CD4-positive, alpha-beta memory T cell (primary cell): ENCODE measurements at regions of chr1 and their contacts with region 1.

Region 1: DNA sequence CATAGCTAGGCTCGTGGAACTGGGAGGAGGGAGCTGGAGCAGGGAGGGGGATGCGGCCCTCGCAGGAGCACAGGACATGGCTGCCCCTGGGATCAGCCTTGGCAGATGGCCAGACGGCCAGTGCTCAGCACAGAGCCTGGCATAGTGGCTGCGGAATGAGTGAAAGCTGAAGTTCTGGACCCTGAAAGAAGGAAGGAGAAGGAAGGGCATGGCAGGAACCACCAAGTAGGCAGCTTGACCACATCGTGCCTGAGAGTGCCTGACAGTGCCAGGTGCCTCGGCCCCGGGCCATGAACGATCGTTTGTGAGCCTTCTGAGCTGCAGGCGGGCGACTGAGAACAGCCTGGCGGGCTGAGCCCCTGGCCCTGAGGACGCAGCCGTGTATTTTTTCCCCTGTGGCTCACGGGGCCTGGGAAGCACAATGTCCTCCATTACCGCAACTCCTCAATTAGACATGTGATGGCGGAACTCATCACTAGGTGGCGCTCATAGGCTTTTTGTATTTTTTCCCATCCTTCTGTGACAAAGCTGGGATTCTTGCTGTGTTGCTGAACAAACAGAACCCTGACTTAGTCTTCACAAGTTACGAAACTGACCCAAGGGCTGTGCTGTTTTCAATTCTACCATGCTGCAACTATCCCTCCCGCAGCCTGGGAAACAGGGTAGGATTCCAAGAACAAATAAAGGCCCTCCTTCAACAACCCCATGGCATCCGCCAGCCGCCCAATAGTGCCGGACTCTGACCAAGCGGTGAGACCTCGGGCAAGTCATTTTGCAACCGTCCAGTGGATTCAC is 29.9 kb upstream of the TMEM61 start:
- DNase-seq: peak; percentile 35 to 56 (median 41)
- H3K4me3 ChIP-seq: no peak overlapping the region
- H3K4me3 Mint-ChIP-seq: peak overlapping the region in 4 of 8 donors; percentile 4 to 62 (median 30)
- H3K27ac ChIP-seq: no peak overlapping the region
- H3K27ac Mint-ChIP-seq: peak overlapping the region in 4 of 7 donors; percentile 0 to 77 (median 50)
- H3K4me1 ChIP-seq: peaks cover 12% of the 10 kb centered on the region
- H3K4me1 Mint-ChIP-seq: peaks cover 9 to 18% (median 14%) of the 10 kb centered on the region in 4 donors
- H3K27me3 ChIP-seq: no peaks in the 10 kb centered on the region
- H3K27me3 Mint-ChIP-seq: no peaks in the 10 kb centered on the region

Region 2: GRCh38 chr1:54996359-54996868 is 45.8 kb after region 1 on chr1:
- CTCF ChIA-PET with region 1: interaction called, 337 read pairs
- POLR2A ChIA-PET with region 1: interaction called, 18 read pairs
- intact Hi-C with region 1: loop called (anchors 1 kb)
- DNase-seq: peak; percentile 76 to 83 (median 81)
- H3K4me3 ChIP-seq: peak overlapping the region in 1 of 2 donors; percentile 41
- H3K4me3 Mint-ChIP-seq: peak overlapping the region; percentile 50 to 80 (median 75)
- H3K27ac ChIP-seq: peak overlapping the region; percentile 23
- H3K27ac Mint-ChIP-seq: peak overlapping the region; percentile 84 to 95 (median 93)
- H3K4me1 ChIP-seq: peaks cover 22% of the 10 kb centered on the region
- H3K4me1 Mint-ChIP-seq: peaks cover 21 to 29% (median 21%) of the 10 kb centered on the region in 4 donors
- H3K27me3 ChIP-seq: peaks cover 7% of the 10 kb centered on the region
- H3K27me3 Mint-ChIP-seq: peaks cover 15 to 28% of the 10 kb centered on the region in 2 donors

Region 3: DNA sequence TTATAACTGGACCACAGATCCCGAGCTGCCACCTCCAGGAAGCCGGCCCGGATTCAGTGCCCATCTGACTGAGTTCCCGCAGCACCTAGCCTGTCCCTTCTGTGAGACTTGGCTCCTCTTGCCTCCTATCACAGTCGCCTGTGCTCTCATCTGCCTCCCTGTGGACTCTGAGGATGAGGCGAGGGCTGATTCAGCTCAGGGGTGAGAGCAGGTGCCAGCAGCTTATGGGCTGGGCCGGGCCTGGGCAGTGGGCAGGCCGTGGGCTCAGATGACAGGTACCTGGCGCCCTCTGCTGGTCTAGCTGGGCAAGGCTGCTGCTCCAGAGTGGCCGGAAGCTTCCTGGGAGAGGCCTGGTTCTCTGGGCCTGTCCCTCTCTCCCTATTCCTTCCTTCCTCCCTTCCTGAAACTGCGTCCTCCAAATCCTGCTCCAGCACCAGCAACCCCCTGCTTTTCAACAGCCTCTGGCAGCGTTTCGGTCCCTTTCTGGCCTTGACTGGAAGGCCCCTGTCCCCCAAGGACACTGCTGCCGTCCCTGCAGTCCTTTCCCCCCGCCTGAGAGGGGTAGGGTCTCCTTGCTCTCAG is 71.5 kb after region 1 on chr1:
- CTCF ChIA-PET with region 1: interaction called, 34 read pairs
- POLR2A ChIA-PET with region 1: no interaction called
- intact Hi-C with region 1: loop called (anchors 2 kb)
- DNase-seq: peak; percentile 28 to 53 (median 41)
- H3K4me3 ChIP-seq: no peak overlapping the region
- H3K4me3 Mint-ChIP-seq: no peak overlapping the region
- H3K27ac ChIP-seq: no peak overlapping the region
- H3K27ac Mint-ChIP-seq: no peak overlapping the region
- H3K4me1 ChIP-seq: no peaks in the 10 kb centered on the region
- H3K4me1 Mint-ChIP-seq: peaks cover 0 to 3% (median 1%) of the 10 kb centered on the region in 4 donors
- H3K27me3 ChIP-seq: no peaks in the 10 kb centered on the region
- H3K27me3 Mint-ChIP-seq: peaks cover 9 to 10% of the 10 kb centered on the region in 2 donors

Region 4: GRCh38 chr1:55230659-55231058 is 280.1 kb after region 1 on chr1:
- CTCF ChIA-PET with region 1: no interaction called
- POLR2A ChIA-PET with region 1: no interaction called
- intact Hi-C with region 1: no loop called
- DNase-seq: no peak
- H3K4me3 ChIP-seq: no peak overlapping the region
- H3K4me3 Mint-ChIP-seq: no peak overlapping the region
- H3K27ac ChIP-seq: no peak overlapping the region
- H3K27ac Mint-ChIP-seq: no peak overlapping the region
- H3K4me1 ChIP-seq: no peaks in the 10 kb centered on the region
- H3K4me1 Mint-ChIP-seq: peaks cover 0 to 6% (median 3%) of the 10 kb centered on the region in 4 donors
- H3K27me3 ChIP-seq: no peaks in the 10 kb centered on the region
- H3K27me3 Mint-ChIP-seq: peaks cover 12 to 19% of the 10 kb centered on the region in 2 donors

Region 5: GRCh38 chr1:56709269-56709880 is 1758.8 kb after region 1 on chr1:
- CTCF ChIA-PET with region 1: no interaction called
- POLR2A ChIA-PET with region 1: no interaction called
- intact Hi-C with region 1: loop called (anchors 10 kb)
- DNase-seq: peak in 4 of 5 donors; percentile 2 to 13 (median 6)
- H3K4me3 ChIP-seq: no peak overlapping the region
- H3K4me3 Mint-ChIP-seq: no peak overlapping the region
- H3K27ac ChIP-seq: no peak overlapping the region
- H3K27ac Mint-ChIP-seq: no peak overlapping the region
- H3K4me1 ChIP-seq: no peaks in the 10 kb centered on the region
- H3K4me1 Mint-ChIP-seq: no peaks in the 10 kb centered on the region
- H3K27me3 ChIP-seq: peaks cover 4% of the 10 kb centered on the region
- H3K27me3 Mint-ChIP-seq: peaks cover 2 to 9% of the 10 kb centered on the region in 2 donors